PC-3 (cell line): ENCODE measurements at regions of chr3 and their contacts with region 1.

Region 1: GRCh38 chr3:152574461-152575079 is 260.4 kb upstream of the P2RY1 start:
- DNase-seq: peak; percentile 66
- ATAC-seq: peak; percentile 88
- H3K4me3 ChIP-seq: no peak overlapping the region
- H3K27ac ChIP-seq: no peak overlapping the region
- H3K4me1 ChIP-seq: no peaks in the 10 kb centered on the region
- H3K27me3 ChIP-seq: peaks cover 45% of the 10 kb centered on the region
- CTCF ChIP-seq: peak; percentile 78

Region 2: DNA sequence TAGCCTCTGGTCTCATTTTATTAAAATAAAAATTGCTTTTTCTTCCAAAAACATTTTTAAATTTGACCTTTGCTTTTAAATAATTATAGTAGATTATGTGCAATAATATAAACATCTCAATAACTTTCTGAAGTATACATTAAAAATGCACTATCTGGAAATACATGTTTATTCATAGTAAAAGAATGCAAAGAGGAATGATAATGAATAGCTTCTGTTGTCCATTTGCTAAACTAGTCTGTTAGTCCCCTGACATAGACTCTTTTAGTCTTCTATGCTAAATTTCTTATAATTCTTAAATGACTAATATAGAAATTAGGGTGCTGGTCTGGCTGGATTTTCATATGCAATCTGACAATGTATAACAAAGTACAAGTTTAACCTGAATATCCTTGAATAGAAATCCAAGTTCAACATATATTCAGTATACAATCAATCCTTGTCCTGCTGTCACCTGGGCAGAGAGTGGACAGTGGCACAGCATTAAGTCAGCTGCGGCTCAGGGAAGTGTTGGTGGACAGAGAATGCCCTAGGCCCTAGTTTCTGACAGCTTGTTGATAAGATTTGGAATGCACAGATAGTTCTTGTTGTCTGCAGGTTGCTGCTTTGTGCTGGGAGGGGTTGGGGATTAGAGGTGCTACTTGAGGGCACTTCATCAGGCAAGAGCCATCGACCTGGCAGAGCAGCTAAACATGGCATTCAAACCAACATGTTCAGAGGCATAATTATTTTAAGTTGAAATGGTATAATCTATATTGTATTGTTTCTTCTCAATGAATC is 144.2 kb before region 1 on chr3:
- CTCF ChIA-PET with region 1: no interaction called
- POLR2A ChIA-PET with region 1: no interaction called
- intact Hi-C with region 1: no loop called
- DNase-seq: no peak
- ATAC-seq: 0 out of 2 replicates have a peak, but pooled peaks have one; percentile 22
- H3K4me3 ChIP-seq: no peak overlapping the region
- H3K27ac ChIP-seq: no peak overlapping the region
- H3K4me1 ChIP-seq: 0 out of 2 replicates have a peak, but pooled peaks cover 8% of the 10 kb centered on the region
- H3K27me3 ChIP-seq: no peaks in the 10 kb centered on the region
- CTCF ChIP-seq: no peak

Region 3: GRCh38 chr3:152471814-152472671 is 102.5 kb before region 1 on chr3:
- CTCF ChIA-PET with region 1: interaction called, 6 read pairs
- POLR2A ChIA-PET with region 1: no interaction called
- intact Hi-C with region 1: loop called (anchors 1 kb)
- DNase-seq: peak; percentile 77
- ATAC-seq: peak; percentile 85
- H3K4me3 ChIP-seq: peak overlapping the region; percentile 11; the same call in 1 of the 2 replicates
- H3K27ac ChIP-seq: no peak overlapping the region
- H3K4me1 ChIP-seq: no peaks in the 10 kb centered on the region
- H3K27me3 ChIP-seq: no peaks in the 10 kb centered on the region
- CTCF ChIP-seq: peak; percentile 74

Region 4: GRCh38 chr3:152508705-152509104 is 65.9 kb before region 1 on chr3:
- CTCF ChIA-PET with region 1: no interaction called
- POLR2A ChIA-PET with region 1: no interaction called
- intact Hi-C with region 1: loop called (anchors 1 kb)
- DNase-seq: peak; percentile 61
- ATAC-seq: peak; percentile 48; the same call in 1 of the 2 replicates
- H3K4me3 ChIP-seq: no peak overlapping the region
- H3K27ac ChIP-seq: no peak overlapping the region
- H3K4me1 ChIP-seq: no peaks in the 10 kb centered on the region
- H3K27me3 ChIP-seq: no peaks in the 10 kb centered on the region; the same call in 1 of the 2 replicates
- CTCF ChIP-seq: peak; percentile 58